Activated B cell treated with CpG ODN at 0.5 μM for 24 hours (primary cell): ENCODE measurements at regions of chr1 and their contacts with region 1.

Region 1: DNA sequence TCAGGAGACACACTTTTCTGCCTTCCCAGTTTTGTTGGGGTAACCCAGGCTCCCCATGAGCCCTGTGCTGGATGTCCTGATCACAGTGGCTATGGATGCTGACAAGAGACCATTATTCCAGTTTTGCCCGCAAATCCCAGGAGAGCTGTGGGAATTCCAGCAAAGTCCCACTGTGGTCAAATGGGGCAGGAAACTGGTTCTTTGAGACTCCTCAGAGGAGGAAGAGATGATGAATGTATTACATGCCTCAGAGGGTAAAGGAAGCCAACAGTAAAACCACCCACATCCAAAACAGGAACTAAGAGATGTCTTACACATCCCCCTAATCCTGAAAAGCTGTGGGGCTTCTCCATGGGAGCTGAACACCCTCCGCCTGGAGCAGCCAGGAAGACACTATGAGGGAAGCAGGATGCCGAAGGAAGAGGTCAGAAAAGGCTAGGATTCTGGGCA is 12.8 kb upstream of the MPZL1 start:
- DNase-seq: peak; percentile 53
- ATAC-seq: peak; percentile 72
- H3K4me3 Mint-ChIP-seq: peak overlapping the region; percentile 77
- H3K27ac Mint-ChIP-seq: peak overlapping the region; percentile 89
- H3K4me1 Mint-ChIP-seq: peaks cover 84% of the 10 kb centered on the region
- H3K27me3 Mint-ChIP-seq: no peaks in the 10 kb centered on the region
- CTCF ChIP-seq: no peak

Region 2: DNA sequence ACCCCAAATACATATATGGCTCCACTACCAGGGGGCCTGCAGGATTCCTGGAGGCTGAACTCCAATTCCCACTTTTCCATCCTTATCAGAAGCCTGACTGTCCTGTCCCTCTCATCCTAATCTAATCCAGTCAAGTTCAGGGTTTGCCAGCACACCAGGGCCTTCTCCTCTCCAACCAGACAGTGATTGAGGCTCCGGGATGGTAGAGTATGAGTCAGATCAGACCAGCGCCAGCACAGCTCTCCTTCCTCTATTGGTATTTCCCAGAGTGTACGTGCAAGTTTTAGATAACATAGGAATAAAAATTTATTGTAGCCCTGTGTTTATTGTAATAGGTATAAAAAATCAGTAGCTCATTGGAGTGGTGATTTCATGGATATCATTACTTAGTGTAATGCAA is 103.4 kb before region 1 on chr1:
- CTCF ChIA-PET with region 1: interaction called, 12 read pairs
- POLR2A ChIA-PET with region 1: interaction called, 12 read pairs
- intact Hi-C with region 1: no loop called
- DNase-seq: no peak
- ATAC-seq: no peak
- H3K4me3 Mint-ChIP-seq: no peak overlapping the region
- H3K27ac Mint-ChIP-seq: peak overlapping the region; percentile 21
- H3K4me1 Mint-ChIP-seq: peaks cover 36% of the 10 kb centered on the region
- H3K27me3 Mint-ChIP-seq: no peaks in the 10 kb centered on the region
- CTCF ChIP-seq: no peak

Region 3: DNA sequence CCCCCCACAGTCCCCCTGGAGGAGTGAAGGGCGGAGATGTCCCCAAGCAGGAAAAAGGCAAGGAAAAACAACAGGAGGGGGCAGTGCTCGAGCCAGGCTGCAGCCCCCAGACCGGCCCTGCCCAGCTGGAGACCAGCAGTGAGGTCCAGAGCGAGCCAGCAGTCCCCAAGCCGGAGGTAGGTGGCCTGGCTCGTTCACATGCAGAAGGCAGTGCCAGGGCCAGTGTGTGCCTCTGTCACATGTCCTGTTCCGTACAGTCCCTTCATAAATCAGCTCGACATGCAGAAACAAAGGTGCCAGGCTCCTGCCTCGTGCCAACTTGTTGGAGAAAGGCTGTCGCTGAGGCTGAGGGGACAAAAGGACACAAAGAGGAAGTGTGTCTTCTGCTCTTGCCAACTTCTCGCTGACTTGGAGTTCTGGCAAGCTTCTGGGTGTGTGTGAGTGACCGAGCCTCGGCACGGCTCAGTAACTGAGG is 11.3 kb before region 1 on chr1:
- CTCF ChIA-PET with region 1: no interaction called
- POLR2A ChIA-PET with region 1: interaction called, 12 read pairs
- intact Hi-C with region 1: loop called (anchors 1 kb)
- DNase-seq: no peak
- ATAC-seq: peak; percentile 21
- H3K4me3 Mint-ChIP-seq: no peak overlapping the region
- H3K27ac Mint-ChIP-seq: peak overlapping the region; percentile 61
- H3K4me1 Mint-ChIP-seq: peaks cover 22% of the 10 kb centered on the region
- H3K27me3 Mint-ChIP-seq: no peaks in the 10 kb centered on the region
- CTCF ChIP-seq: no peak

Region 4: GRCh38 chr1:167721617-167722151 is 12.7 kb after region 1 on chr1 and contains the start of gene MPZL1:
- CTCF ChIA-PET with region 1: no interaction called
- POLR2A ChIA-PET with region 1: interaction called, 6 read pairs
- intact Hi-C with region 1: loop called (anchors 1 kb)
- DNase-seq: peak; percentile 94
- ATAC-seq: peak; percentile 96
- H3K4me3 Mint-ChIP-seq: peak within 1 kb of the TSS; percentile 94
- H3K27ac Mint-ChIP-seq: peak within 1 kb of the TSS; percentile 96
- H3K4me1 Mint-ChIP-seq: peaks cover 77% of the 10 kb centered on the region
- H3K27me3 Mint-ChIP-seq: no peaks in the 10 kb centered on the region
- CTCF ChIP-seq: no peak
- total RNA-seq, gene MPZL1: 27.2 and 27.4 TPM in 2 replicates